ENCODE measurements at regions of chr4 and their contacts with region 1.

Region 1: GRCh38 chr4:12861340-12861739 is 622.8 kb downstream of the RAB28 start:
- DNase-seq: no peak
- H3K4me3 ChIP-seq: no peak overlapping the region
- H3K27ac ChIP-seq: no peak overlapping the region
- H3K4me1 ChIP-seq: no peaks in the 10 kb centered on the region
- H3K27me3 ChIP-seq: no peaks in the 10 kb centered on the region
- CTCF ChIP-seq: no peak
- EP300 ChIP-seq: no peak
- POLR2A ChIP-seq: no peak

Region 2: DNA sequence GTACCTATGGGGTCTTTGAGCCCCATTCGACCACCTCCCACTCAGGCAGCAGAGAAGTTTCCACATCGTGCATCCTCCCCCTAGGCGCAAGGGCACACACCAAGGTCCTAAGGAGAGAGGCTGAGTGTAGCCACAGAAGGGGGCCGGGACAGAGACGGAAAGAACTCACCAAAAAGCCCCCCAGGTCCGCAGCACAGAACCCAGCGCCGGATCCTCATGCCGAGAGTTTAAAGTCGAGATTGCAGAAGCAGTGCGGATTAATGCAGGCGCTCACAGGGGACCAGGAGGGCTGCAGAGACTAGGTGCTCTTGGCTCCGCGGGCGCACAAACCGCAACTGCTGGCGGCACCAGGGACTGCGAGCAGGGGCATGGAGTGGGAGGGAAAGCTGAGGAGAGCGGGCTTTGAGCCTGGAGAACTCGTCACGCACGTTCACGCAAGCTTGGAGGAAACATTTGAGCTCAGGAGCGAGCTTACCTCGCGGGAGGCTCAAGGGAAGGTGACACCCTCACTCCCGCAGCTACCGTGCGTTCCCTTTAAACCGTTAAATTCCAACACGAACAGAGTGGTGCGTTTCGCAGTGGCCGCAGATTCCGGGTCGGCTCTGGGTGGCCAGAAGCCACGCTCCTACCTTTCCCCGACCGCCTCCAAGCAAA is 674.5 kb after region 1 on chr4:
- in situ Hi-C with region 1: loop called in 3 of 4 experiments (anchors 5 to 10 kb)
- intact Hi-C with region 1: no loop called
- DNase-seq: no peak
- H3K4me3 ChIP-seq: peak overlapping the region in 3 of 4 donors; percentile 7 to 17 (median 11)
- H3K27ac ChIP-seq: peak overlapping the region in 3 of 4 donors; percentile 19 to 94 (median 27)
- H3K4me1 ChIP-seq: no peaks in the 10 kb centered on the region
- H3K27me3 ChIP-seq: peaks cover 100% of the 10 kb centered on the region
- CTCF ChIP-seq: no peak
- EP300 ChIP-seq: no peak
- POLR2A ChIP-seq: no peak